Calu3 (cell line): ENCODE measurements at regions of chr18 and their contacts with region 1.

Region 1: DNA sequence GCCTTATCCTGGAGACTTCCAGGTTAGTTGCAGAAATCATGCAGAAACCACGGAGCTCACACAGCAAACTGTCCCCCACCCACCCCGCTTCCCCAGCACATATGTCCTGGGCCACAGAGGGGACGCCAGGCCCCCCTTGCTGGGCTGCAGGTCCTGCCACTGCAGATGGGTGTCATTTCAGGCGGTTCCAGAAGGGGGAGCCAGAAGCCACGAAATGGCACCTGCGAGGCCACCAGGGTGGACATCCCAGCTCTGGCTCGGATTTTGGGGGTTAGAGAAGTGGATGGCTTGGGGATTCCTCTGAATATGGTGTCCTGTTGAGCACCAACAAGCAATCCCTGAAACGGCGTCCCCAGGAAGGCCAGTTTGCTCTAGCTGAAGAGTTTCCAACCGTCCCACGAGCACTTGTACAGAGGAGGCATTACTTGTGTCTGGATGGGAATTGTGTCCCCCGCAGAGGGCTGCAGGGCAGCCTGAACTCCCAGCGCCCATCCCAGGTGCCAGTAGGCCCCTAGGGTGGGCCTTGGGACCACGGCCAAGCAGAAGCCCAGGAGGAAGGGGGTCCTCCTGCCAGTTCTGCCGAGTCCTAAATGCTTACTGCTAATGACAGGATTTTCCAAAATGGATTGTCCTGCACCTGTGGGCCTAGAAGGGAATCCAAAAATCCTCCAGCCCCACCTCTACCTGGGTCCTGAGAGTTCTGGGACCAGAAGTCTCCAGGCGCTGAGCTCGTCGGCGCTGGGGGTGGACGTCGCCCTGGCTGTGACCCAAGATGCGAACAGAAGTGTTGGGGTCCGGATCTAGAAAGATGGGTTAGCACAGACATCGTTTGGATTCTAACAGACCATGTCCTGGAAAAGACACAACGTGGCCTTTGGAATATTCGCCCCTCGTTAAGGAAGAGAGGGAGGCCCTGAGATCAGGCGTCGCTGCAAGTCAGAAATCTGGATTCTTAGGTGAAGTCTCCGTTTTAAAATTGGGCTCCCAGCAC is 14.6 kb upstream of the NFATC1 start:
- DNase-seq: peak; percentile 68
- H3K4me3 Mint-ChIP-seq: no peak overlapping the region
- H3K27ac Mint-ChIP-seq: no peak overlapping the region
- H3K4me1 Mint-ChIP-seq: peaks cover 10% of the 10 kb centered on the region
- H3K27me3 Mint-ChIP-seq: peaks cover 17% of the 10 kb centered on the region
- CTCF ChIP-seq: peak; percentile 67

Region 2: DNA sequence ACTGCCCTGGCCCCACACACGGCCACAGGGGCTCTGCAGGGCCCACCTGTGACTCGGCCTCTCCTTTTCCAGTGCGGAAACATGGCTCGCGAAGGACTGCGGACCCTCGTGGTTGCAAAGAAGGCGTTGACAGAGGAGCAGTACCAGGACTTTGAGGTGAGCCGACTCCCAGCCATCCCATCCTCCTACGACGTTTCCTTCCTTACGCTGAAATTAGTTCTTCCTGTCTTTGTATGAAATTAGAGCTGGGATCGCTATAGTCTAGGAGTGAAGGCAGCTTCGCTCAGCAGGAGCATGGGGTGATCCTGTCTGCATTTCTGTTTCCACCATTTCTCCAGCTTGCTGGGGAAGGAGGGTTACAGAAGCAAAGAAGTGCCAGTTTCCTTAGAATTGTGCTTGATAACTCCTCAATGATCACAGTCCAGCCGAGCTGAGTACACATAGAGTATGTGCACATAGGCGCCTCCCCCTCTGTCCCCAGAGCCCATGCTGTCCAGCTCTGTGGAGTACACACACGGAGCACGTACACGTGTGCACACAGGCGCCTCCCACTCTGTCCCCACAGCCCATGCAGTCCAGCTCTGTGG is 44.5 kb before region 1 on chr18:
- CTCF ChIA-PET with region 1: interaction called, 11 read pairs
- intact Hi-C with region 1: no loop called
- DNase-seq: no peak
- H3K4me3 Mint-ChIP-seq: no peak overlapping the region
- H3K27ac Mint-ChIP-seq: no peak overlapping the region
- H3K4me1 Mint-ChIP-seq: no peaks in the 10 kb centered on the region
- H3K27me3 Mint-ChIP-seq: no peaks in the 10 kb centered on the region
- CTCF ChIP-seq: no peak

Region 3: DNA sequence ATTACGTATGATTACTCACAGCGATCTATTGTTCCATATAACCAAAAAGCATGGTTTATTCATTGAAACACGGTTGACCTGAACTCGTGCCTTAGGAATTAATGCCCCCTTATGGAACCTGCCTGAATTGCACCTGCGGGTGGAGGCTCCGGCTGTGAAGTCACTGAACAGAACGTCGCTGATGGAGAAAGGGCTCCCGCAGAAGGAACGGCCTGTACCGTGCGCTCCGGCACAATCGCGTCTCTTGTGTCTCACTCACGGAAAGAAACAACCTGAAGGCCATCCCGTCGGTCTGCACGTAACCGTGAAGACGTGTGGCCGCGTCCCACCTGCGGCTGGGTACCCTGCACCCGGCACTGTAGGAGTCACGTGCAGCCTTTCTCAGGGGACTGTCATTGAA is 147.7 kb after region 1 on chr18:
- CTCF ChIA-PET with region 1: no interaction called
- intact Hi-C with region 1: loop called (anchors 2 kb)
- DNase-seq: peak; percentile 59
- H3K4me3 Mint-ChIP-seq: no peak overlapping the region
- H3K27ac Mint-ChIP-seq: no peak overlapping the region
- H3K4me1 Mint-ChIP-seq: no peaks in the 10 kb centered on the region
- H3K27me3 Mint-ChIP-seq: no peaks in the 10 kb centered on the region
- CTCF ChIP-seq: peak; percentile 37

Region 4: DNA sequence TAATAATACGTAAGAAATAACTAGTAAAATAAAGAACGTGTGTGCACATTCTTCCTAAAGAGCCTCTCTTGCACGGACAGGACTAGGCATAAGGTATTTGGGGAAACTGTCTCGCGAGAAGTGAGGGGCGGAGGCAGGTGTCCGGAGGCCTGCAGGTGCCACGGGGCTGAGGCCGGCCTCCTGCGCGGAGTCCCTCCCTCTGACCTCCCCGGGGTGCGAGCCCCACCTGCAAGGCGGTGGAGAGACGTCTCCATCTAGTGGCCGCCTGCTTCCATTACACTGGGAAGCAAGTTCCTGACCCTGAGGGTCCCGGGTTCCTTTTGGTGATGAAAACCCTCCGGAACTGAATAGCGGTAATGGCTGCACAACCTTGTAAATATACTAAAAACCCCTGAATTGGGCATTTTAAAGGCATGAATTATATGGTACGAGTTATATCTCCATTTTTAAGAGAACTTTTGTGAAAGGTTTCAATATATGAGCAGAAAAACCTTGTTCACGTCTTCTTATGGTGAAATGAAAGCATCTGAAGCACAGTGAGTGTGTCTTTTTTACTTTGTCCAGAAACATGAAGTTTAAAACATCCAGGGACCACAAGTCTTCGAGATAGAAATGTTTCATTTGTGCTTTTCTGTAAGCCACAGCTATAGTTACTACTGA is 263.0 kb after region 1 on chr18:
- CTCF ChIA-PET with region 1: interaction called, 3 read pairs
- intact Hi-C with region 1: loop called (anchors 1 kb)
- DNase-seq: peak; percentile 72
- H3K4me3 Mint-ChIP-seq: no peak overlapping the region
- H3K27ac Mint-ChIP-seq: no peak overlapping the region
- H3K4me1 Mint-ChIP-seq: no peaks in the 10 kb centered on the region
- H3K27me3 Mint-ChIP-seq: no peaks in the 10 kb centered on the region
- CTCF ChIP-seq: peak; percentile 86